Endothelial cell of umbilical vein (primary cell): ENCODE measurements at regions of chr2 and their contacts with region 1.

Region 1: DNA sequence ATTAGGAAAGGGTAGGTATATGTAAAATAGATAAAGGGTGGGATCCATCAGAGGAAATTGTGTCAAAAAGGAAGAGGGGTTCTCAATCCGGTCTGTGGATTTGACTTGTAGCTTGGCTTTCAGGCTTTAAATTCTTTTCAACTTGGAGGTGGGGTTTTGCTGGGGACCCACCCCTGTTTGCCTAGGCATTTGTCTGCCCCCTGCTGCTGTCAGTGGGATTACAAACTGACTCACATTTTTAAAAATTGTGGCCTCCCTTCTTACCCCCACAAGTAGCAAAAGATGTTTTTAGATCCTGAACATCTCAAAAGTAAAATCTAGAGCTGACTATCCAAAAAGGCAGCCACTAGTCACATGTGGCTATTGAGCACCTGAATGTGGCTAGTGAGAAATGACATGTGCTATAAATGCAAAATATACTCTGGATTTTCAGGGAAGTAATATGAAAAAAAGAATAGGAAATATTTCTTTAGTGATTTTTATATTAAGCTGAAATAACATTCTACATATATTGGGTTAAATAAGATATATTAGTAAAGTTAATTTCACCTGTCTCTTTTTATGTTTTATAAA is 178.9 kb downstream of the GFPT1 start:
- DNase-seq: peak; percentile 12
- H3K4me3 ChIP-seq: no peak overlapping the region
- H3K27ac ChIP-seq: no peak overlapping the region
- H3K4me1 ChIP-seq: no peaks in the 10 kb centered on the region
- H3K27me3 ChIP-seq: no peaks in the 10 kb centered on the region
- CTCF ChIP-seq: peak; percentile 5 to 18
- POLR2A ChIP-seq: no peak

Region 2: GRCh38 chr2:69012310-69013141 is 195.6 kb before region 1 on chr2:
- CTCF ChIA-PET with region 1: no interaction called
- POLR2A ChIA-PET with region 1: no interaction called
- dilution Hi-C with region 1: no loop called
- intact Hi-C with region 1: loop called (anchors 5 kb)
- DNase-seq: peak; percentile 56
- H3K4me3 ChIP-seq: peak overlapping the region in 2 of 3 experiments; percentile 54 to 63
- H3K27ac ChIP-seq: no peak overlapping the region
- H3K4me1 ChIP-seq: peaks cover 13% of the 10 kb centered on the region
- H3K27me3 ChIP-seq: peaks cover 7 to 9% of the 10 kb centered on the region in 2 experiments
- CTCF ChIP-seq: peak; percentile 66 to 74
- POLR2A ChIP-seq: no peak

Region 3: DNA sequence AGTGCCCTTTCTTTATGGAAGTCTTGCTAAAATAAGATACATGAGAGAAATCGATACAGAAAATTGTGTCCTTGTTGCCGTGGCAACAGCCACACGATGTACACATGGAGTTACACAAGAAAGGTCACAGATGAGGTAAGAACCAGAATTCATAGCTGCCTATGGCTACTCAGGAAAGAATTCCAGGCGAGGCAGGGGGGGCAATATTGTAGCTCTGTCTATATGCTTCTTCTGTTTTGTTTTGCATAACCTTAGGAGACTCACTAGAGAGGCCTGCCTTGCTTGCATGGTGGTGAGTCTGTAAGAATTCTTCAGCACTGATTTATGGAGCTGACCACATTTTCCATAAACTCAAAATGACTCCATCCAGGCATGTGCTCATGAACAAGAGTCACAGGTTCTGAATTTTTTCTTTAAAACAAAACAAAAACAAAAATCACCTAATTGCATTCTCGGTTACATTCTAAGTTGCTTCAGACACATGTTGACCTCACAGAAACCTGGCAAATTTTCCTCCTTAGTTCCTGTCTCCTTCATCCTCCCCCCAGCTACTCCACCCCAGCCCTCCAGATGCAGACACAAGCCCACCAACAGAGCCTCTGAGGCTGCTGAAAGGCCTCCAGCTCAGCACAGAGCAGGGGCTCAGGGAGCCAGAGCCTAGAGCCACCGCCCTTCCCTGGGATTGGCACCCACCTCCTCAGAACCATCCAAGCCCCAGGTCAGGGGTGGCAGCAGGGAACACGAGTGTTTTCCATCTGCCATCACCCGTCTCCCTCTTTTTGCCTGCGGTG is 11.6 kb before region 1 on chr2:
- CTCF ChIA-PET with region 1: interaction called, 10 read pairs
- POLR2A ChIA-PET with region 1: no interaction called
- dilution Hi-C with region 1: no loop called
- intact Hi-C with region 1: no loop called
- DNase-seq: no peak
- H3K4me3 ChIP-seq: no peak overlapping the region
- H3K27ac ChIP-seq: no peak overlapping the region
- H3K4me1 ChIP-seq: peaks cover 10% of the 10 kb centered on the region
- H3K27me3 ChIP-seq: no peaks in the 10 kb centered on the region
- CTCF ChIP-seq: no peak
- POLR2A ChIP-seq: no peak

Region 4: DNA sequence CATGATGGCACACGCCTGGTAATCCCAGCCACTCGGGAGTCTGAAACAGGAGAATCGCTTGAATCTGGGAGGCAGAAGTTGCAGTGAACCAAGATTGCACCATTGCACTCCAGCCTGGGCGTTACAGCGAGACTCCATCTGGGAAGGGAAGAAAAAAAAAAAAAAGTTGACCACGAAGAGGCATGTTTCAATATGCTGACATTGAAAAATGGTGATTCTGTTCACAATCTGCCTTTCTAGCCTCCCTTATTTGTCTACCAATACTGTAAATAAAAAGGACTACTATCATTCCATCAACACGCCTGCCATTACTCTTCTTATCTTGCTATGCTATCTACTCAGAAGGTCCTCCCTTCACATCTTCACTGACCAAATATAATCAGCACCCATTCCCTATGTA is 160.5 kb after region 1 on chr2:
- CTCF ChIA-PET with region 1: no interaction called
- POLR2A ChIA-PET with region 1: no interaction called
- dilution Hi-C with region 1: no loop called
- intact Hi-C with region 1: no loop called
- DNase-seq: no peak
- H3K4me3 ChIP-seq: no peak overlapping the region
- H3K27ac ChIP-seq: no peak overlapping the region
- H3K4me1 ChIP-seq: no peaks in the 10 kb centered on the region
- H3K27me3 ChIP-seq: no peaks in the 10 kb centered on the region
- CTCF ChIP-seq: no peak
- POLR2A ChIP-seq: no peak